ENCODE measurements at regions of chr1 and their contacts with region 1.

Region 1: DNA sequence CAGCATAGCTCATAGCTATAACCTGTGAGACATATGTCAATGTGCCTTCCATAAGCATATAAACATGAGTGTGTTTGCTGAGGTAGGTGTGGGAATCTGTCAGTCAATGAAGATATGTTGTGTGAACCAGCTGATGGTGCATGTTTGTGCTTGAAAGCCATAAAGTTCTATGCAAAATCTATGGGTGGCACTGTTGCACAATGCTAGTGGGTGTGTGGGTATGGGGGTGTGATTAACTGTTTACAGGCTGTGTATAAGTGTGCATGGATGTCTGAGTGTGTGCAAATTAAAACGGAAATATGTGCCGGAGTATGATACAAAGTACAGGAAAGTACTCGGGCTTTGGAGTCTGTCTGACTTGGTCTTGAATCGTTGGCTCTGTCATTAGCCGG is 1.0 kb upstream of the ATP2B4 start:
- DNase-seq: peak; percentile 45 to 91 (median 57)
- ATAC-seq: peak; percentile 66
- H3K4me3 ChIP-seq: peak overlapping the region; percentile 92
- H3K4me3 Mint-ChIP-seq: peak overlapping the region; percentile 77
- H3K27ac ChIP-seq: peak overlapping the region; percentile 72 to 86
- H3K27ac Mint-ChIP-seq: peak overlapping the region; percentile 81
- H3K4me1 ChIP-seq: peaks cover 49% of the 10 kb centered on the region
- H3K4me1 Mint-ChIP-seq: peaks cover 47% of the 10 kb centered on the region
- H3K27me3 ChIP-seq: no peaks in the 10 kb centered on the region
- H3K27me3 Mint-ChIP-seq: no peaks in the 10 kb centered on the region
- CTCF ChIP-seq: peak; percentile 74

Region 2: DNA sequence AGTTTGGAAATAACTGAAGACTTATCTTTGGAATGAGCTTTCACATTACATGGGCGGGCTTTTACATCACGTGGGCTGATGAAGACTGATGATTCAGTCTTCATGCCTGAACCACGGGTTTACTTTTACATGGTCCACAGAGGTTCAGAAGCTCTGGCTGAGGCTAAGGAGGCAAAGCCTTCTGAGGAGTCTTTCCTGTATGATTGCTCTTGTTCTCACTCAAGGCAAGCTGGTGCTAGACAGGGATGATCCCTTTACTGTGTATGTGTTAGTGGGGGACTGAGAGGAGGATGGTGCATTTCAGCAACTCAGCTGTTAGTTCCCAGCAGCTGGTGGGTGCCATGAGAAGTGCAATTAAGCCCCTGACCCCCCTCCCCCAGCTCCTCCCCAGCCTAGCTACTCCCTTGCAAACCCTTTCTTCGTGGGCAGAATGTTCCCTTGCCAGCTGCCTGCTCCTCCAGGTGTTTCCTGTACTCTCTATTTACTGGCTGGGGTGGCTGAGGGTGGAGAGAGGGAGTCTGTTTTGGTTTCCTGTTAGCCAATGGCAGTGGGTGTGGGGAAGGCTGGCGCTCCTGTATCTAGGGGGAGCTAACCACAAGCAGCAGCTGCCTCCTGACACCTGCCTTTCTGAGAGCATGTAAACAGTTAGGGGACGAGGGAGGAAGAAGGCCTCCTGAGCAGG is 304.9 kb before region 1 on chr1:
- CTCF ChIA-PET with region 1: no interaction called
- POLR2A ChIA-PET with region 1: interaction called, 8 read pairs
- intact Hi-C with region 1: loop called in 1 of 2 experiments (anchors 5 kb)
- DNase-seq: peak; percentile 47 to 95 (median 78)
- ATAC-seq: peak; percentile 70
- H3K4me3 ChIP-seq: peak overlapping the region; percentile 13
- H3K4me3 Mint-ChIP-seq: peak overlapping the region; percentile 82
- H3K27ac ChIP-seq: peak overlapping the region; percentile 98 to 99
- H3K27ac Mint-ChIP-seq: peak overlapping the region; percentile 92
- H3K4me1 ChIP-seq: peaks cover 82% of the 10 kb centered on the region
- H3K4me1 Mint-ChIP-seq: peaks cover 93% of the 10 kb centered on the region
- H3K27me3 ChIP-seq: no peaks in the 10 kb centered on the region
- H3K27me3 Mint-ChIP-seq: no peaks in the 10 kb centered on the region
- CTCF ChIP-seq: no peak

Region 3: GRCh38 chr1:203593723-203594122 is 31.9 kb before region 1 on chr1:
- CTCF ChIA-PET with region 1: interaction called, 21 read pairs
- POLR2A ChIA-PET with region 1: interaction called, 3 read pairs
- intact Hi-C with region 1: loop called in 1 of 2 experiments (anchors 1 kb)
- DNase-seq: peak; percentile 35 to 75 (median 64)
- ATAC-seq: peak; percentile 85
- H3K4me3 ChIP-seq: no peak overlapping the region
- H3K4me3 Mint-ChIP-seq: no peak overlapping the region
- H3K27ac ChIP-seq: no peak overlapping the region
- H3K27ac Mint-ChIP-seq: no peak overlapping the region
- H3K4me1 ChIP-seq: peaks cover 9% of the 10 kb centered on the region
- H3K4me1 Mint-ChIP-seq: peaks cover 5% of the 10 kb centered on the region
- H3K27me3 ChIP-seq: no peaks in the 10 kb centered on the region
- H3K27me3 Mint-ChIP-seq: no peaks in the 10 kb centered on the region
- CTCF ChIP-seq: peak; percentile 52

Region 4: GRCh38 chr1:203649999-203650855 is 24.6 kb after region 1 on chr1:
- CTCF ChIA-PET with region 1: interaction called, 19 read pairs
- POLR2A ChIA-PET with region 1: interaction called, 45 read pairs
- intact Hi-C with region 1: loop called (anchors 1 to 2 kb)
- DNase-seq: peak; percentile 44 to 88 (median 70)
- ATAC-seq: peak; percentile 61
- H3K4me3 ChIP-seq: peak overlapping the region; percentile 48
- H3K4me3 Mint-ChIP-seq: peak overlapping the region; percentile 85
- H3K27ac ChIP-seq: peak overlapping the region; percentile 70 to 82
- H3K27ac Mint-ChIP-seq: peak overlapping the region; percentile 91
- H3K4me1 ChIP-seq: peaks cover 76% of the 10 kb centered on the region
- H3K4me1 Mint-ChIP-seq: peaks cover 63% of the 10 kb centered on the region
- H3K27me3 ChIP-seq: no peaks in the 10 kb centered on the region
- H3K27me3 Mint-ChIP-seq: no peaks in the 10 kb centered on the region
- CTCF ChIP-seq: no peak

Region 5: GRCh38 chr1:203692565-203693470 is 67.2 kb after region 1 on chr1:
- CTCF ChIA-PET with region 1: interaction called, 86 read pairs
- POLR2A ChIA-PET with region 1: interaction called, 18 read pairs
- intact Hi-C with region 1: no loop called
- DNase-seq: peak in 3 of 14 experiments; percentile 29 to 42 (median 33)
- ATAC-seq: peak; percentile 46
- H3K4me3 ChIP-seq: no peak overlapping the region
- H3K4me3 Mint-ChIP-seq: peak overlapping the region; percentile 12
- H3K27ac ChIP-seq: peak overlapping the region in 1 of 2 donors; percentile 43
- H3K27ac Mint-ChIP-seq: peak overlapping the region; percentile 78
- H3K4me1 ChIP-seq: peaks cover 47% of the 10 kb centered on the region
- H3K4me1 Mint-ChIP-seq: peaks cover 63% of the 10 kb centered on the region
- H3K27me3 ChIP-seq: no peaks in the 10 kb centered on the region
- H3K27me3 Mint-ChIP-seq: no peaks in the 10 kb centered on the region
- CTCF ChIP-seq: no peak

Region 6: DNA sequence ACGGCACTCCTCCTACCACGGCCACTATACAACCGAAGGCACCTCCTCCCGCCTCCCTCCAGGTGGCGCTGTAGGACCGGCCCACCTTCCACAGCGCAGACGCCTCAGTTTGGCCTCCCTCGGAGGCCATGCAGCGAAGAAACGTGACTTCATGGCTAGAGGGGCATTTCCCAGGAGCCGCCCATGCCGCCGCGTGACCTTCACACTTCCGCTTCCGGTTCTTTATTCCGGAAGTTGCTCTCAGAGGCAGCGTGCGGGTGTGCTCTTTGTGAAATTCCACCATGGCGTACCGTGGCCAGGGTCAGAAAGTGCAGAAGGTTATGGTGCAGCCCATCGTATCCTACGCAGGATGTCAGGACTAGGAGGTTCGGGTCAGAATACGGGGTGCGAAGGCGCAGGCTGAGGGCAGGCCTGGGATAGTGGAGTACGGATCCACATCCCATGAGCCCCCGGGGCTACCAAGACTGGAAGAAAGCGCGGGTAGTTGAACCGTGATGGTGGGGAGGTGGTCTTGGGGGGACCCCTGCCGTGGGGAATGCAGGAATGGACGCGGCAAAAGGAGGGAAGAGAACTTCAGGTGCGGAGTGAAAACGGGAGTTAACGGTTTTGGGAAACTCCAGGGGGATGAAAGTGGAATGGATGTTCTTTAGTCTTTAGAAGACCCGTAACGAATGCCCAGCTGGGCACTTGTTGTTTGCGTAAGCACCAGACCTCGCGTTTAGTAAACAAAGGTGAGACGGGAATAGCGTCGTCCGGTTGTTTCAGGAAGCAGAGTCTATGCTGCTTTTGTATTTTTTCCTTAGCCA is 236.0 kb after region 1 on chr1 and contains the start of gene SNRPE:
- CTCF ChIA-PET with region 1: no interaction called
- POLR2A ChIA-PET with region 1: no interaction called
- intact Hi-C with region 1: loop called in 1 of 2 experiments (anchors 5 kb)
- DNase-seq: peak; percentile 90 to 99 (median 95)
- ATAC-seq: peak; percentile 98
- H3K4me3 ChIP-seq: peak within 1 kb of the TSS; percentile 95
- H3K4me3 Mint-ChIP-seq: peak within 1 kb of the TSS; percentile 98
- H3K27ac ChIP-seq: peak within 1 kb of the TSS; percentile 64 to 69
- H3K27ac Mint-ChIP-seq: peak within 1 kb of the TSS; percentile 95
- H3K4me1 ChIP-seq: peaks cover 15% of the 10 kb centered on the region
- H3K4me1 Mint-ChIP-seq: peaks cover 30% of the 10 kb centered on the region
- H3K27me3 ChIP-seq: no peaks in the 10 kb centered on the region
- H3K27me3 Mint-ChIP-seq: no peaks in the 10 kb centered on the region
- CTCF ChIP-seq: peak; percentile 87
- total RNA-seq, gene SNRPE: 63.0 to 65.9 TPM